Left ventricle myocardium inferior (tissue), 1 donor: ENCODE measurements at regions of chr21 and their contacts with region 1.

Region 1: DNA sequence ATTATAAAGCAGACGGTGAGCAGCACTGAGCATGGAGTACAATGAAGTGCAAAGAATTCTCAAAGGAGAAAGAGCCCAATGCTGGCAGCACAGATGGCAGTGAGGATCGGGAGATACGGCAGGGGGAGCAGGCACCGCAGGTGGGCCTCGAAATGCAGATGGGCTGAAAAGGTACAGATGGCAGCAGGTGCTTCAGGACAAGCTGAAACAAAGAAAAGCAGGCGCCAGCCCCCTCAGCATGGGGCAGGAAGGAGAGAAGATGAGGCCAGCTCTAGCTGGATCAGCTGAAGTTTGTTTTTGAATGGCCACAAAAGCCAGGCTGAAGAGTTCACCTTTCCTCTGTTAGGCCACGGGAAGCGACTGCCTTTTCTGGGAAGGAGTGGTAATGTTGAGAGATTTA is 7.7 kb downstream of the CFAP298 start:
- DNase-seq: no peak
- H3K4me3 ChIP-seq: no peak overlapping the region
- H3K27ac ChIP-seq: no peak overlapping the region
- H3K4me1 ChIP-seq: peaks cover under 1% of the 10 kb centered on the region
- H3K27me3 ChIP-seq: no peaks in the 10 kb centered on the region
- CTCF ChIP-seq: no peak

Region 2: GRCh38 chr21:32392880-32393676 is 211.4 kb before region 1 on chr21 and contains the start of gene URB1:
- intact Hi-C with region 1: loop called (anchors 10 kb)
- DNase-seq: peak; percentile 93
- H3K4me3 ChIP-seq: peak within 1 kb of the TSS; percentile 100
- H3K27ac ChIP-seq: peak within 1 kb of the TSS; percentile 94
- H3K4me1 ChIP-seq: peaks cover 48% of the 10 kb centered on the region
- H3K27me3 ChIP-seq: no peaks in the 10 kb centered on the region
- CTCF ChIP-seq: no peak
- total RNA-seq, gene URB1: 13.8 TPM

Region 3: DNA sequence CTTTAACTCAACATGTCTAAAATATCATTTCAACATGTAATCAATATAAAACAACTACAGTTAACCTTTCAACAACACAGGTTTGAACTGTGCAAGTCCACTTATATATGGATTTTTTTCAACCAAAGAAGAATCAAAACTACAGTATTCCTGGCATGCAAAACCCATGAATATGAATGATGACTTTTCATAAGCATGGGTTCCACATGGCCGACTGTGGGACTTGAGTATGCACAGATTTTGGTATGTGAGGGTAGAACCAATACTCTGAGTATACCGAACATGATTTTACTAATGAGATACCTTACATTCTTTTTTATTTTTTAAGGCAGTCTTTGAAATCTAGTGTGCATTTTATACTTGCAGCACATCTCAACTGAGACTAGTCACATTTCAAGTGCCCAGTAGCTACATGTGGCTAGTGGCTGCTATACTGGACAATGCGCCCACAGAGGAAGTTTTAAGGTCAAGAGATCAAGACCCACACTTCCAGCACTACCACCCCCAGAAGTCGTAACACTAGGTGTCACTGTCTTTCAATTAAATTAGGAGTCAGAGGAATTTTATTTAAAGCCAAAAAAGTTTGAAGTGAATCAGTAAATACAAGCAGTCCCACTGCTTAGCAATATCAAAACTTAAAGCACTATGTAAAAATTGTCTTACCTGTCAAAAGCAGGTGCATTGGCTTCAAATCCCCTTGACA is 83.3 kb after region 1 on chr21:
- intact Hi-C with region 1: no loop called
- DNase-seq: no peak
- H3K4me3 ChIP-seq: no peak overlapping the region
- H3K27ac ChIP-seq: no peak overlapping the region
- H3K4me1 ChIP-seq: peaks cover 6% of the 10 kb centered on the region
- H3K27me3 ChIP-seq: no peaks in the 10 kb centered on the region
- CTCF ChIP-seq: peak; percentile 27

Region 4: GRCh38 chr21:33025489-33026442 is 421.3 kb after region 1 on chr21 and contains the start of gene OLIG2:
- intact Hi-C with region 1: no loop called
- DNase-seq: no peak
- H3K4me3 ChIP-seq: peak within 1 kb of the TSS; percentile 25
- H3K27ac ChIP-seq: no peak within 1 kb of the TSS
- H3K4me1 ChIP-seq: peaks cover 65% of the 10 kb centered on the region
- H3K27me3 ChIP-seq: peaks cover 100% of the 10 kb centered on the region
- CTCF ChIP-seq: no peak
- total RNA-seq, gene OLIG2: not detected